CD8-positive, alpha-beta T cell (primary cell): ENCODE measurements at regions of chr7 and their contacts with region 1.

Region 1: DNA sequence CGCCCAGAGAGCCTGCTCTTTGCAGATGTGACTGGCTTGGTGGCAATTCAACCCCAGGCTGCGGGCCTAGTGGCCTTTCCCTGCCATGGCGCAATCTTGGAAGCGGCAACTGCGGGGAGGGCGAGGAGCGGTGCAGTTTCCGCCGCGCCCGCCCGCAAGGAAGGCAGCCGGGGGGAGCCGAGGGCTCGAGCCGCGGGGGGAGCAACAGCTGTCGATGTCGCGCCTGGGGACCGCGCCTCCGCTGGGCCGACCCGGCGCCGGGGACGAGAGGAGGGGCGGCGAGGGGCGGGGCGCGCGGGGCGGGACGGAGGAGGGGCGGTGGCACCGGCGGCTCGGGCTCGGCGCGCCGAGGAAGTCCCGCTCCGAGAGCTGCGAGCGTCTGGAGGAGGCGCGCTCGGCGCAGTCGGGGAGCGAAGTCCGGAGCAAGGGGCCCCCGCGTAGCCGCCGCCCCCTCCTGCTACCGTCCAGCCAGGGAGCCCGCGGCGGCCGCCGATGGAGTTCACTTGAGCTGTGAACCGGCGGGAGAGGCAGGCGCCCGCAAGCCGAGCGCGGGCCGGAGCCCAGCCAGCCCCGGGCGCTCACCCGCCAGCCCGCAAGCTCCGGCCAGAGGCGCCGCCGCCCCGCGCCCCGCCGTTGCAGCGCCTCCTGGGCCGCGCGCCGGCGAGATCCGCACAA is 438.1 kb upstream of the GALNT17 start:
- DNase-seq: peak; percentile 29 to 90 (median 69)
- ATAC-seq: peak; percentile 78
- H3K4me3 ChIP-seq: peak overlapping the region in 1 of 2 experiments; percentile 30
- H3K4me3 Mint-ChIP-seq: peak overlapping the region; percentile 82
- H3K27ac ChIP-seq: peak overlapping the region in 1 of 2 experiments; percentile 53
- H3K27ac Mint-ChIP-seq: peak overlapping the region; percentile 72
- H3K4me1 ChIP-seq: peaks cover 8% of the 10 kb centered on the region
- H3K4me1 Mint-ChIP-seq: peaks cover 33% of the 10 kb centered on the region
- H3K27me3 ChIP-seq: no peaks in the 10 kb centered on the region
- H3K27me3 Mint-ChIP-seq: peaks cover 28% of the 10 kb centered on the region
- CTCF ChIP-seq: no peak

Region 2: DNA sequence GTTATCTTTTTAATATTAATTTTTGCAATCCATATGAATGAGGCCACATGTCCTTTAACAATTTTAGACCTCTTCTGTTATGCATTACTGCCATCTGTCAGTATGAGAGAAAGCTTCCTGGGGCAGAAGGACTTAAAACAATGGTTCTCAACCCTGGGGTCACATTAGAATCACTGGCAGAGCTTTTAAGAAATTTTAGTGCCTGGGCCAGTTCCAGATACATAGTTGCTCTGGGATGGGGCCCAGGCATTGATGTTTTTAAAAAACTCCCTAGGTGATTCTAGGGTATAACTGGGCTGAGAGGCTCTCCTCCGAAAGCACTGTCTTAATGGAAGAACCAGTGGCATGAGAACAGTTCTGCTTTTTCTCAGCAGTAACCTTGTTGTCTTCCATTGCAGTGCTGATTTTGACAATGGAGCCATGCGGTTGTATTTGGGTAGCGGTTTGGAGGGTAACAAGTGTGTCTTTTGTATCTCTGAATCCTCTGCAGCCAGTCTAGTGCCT is 868.7 kb before region 1 on chr7:
- CTCF ChIA-PET with region 1: no interaction called
- POLR2A ChIA-PET with region 1: no interaction called
- intact Hi-C with region 1: loop called in 1 of 2 experiments (anchors 10 kb)
- DNase-seq: peak in 1 of 9 experiments; percentile 17
- ATAC-seq: no peak
- H3K4me3 ChIP-seq: peak overlapping the region in 1 of 2 experiments; percentile 53
- H3K4me3 Mint-ChIP-seq: no peak overlapping the region
- H3K27ac ChIP-seq: peak overlapping the region in 1 of 2 experiments; percentile 65
- H3K27ac Mint-ChIP-seq: no peak overlapping the region
- H3K4me1 ChIP-seq: no peaks in the 10 kb centered on the region
- H3K4me1 Mint-ChIP-seq: peaks cover 14% of the 10 kb centered on the region
- H3K27me3 ChIP-seq: no peaks in the 10 kb centered on the region
- H3K27me3 Mint-ChIP-seq: peaks cover 4% of the 10 kb centered on the region
- CTCF ChIP-seq: no peak

Region 3: DNA sequence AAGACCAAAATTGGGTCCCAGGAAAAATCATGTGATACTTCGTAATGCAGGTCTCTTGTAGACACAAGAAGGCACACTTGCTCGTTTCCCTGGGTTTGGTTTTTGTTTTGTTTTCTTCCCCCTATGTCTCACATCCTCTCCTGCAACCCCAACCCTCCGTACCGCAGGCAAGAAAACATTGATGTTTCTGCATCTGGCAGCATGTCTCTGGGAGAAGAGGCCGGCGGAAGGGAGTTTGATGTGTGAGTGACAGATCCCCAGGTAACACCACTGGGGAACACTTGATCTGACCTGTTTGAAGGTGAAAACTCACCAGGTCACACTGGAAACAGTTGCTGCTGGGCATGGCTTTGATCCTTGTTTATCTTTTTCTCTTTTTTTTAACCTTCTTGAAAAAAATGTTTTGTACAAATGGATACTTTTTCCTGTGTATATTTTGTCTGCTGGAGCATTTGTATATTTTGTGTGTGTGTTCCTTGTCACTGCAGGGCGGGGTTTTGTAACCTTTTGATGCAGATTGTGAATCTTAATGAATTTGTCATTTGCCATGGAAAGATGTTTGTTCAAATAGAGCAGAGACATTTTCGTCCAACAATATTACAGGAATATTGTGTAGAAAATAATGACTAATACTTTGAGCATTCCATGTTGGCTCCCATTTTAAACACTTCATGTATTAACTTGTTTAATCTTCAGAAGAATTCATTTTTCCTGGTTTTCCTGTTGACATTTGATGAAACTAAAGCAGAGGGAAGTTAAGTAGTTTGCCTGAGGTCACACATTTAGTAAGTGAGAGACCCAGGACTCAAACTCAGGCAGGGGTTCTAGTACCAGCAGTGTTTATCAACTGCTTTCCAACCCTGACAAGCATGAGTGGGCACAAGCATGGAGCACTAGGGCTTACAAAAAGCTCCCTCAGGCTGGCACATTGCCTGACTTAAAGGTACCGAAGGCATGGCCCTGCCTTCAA is 376.8 kb before region 1 on chr7:
- CTCF ChIA-PET with region 1: no interaction called
- POLR2A ChIA-PET with region 1: no interaction called
- intact Hi-C with region 1: loop called (anchors 10 kb)
- DNase-seq: peak in 6 of 9 experiments; percentile 17 to 56 (median 31)
- ATAC-seq: peak; percentile 54
- H3K4me3 ChIP-seq: no peak overlapping the region
- H3K4me3 Mint-ChIP-seq: peak overlapping the region; percentile 26
- H3K27ac ChIP-seq: no peak overlapping the region
- H3K27ac Mint-ChIP-seq: no peak overlapping the region
- H3K4me1 ChIP-seq: peaks cover 19% of the 10 kb centered on the region
- H3K4me1 Mint-ChIP-seq: peaks cover 42% of the 10 kb centered on the region
- H3K27me3 ChIP-seq: no peaks in the 10 kb centered on the region
- H3K27me3 Mint-ChIP-seq: no peaks in the 10 kb centered on the region
- CTCF ChIP-seq: no peak

Region 4: GRCh38 chr7:70585071-70585470 is 108.8 kb before region 1 on chr7:
- CTCF ChIA-PET with region 1: interaction called, 16 read pairs
- POLR2A ChIA-PET with region 1: no interaction called
- intact Hi-C with region 1: loop called (anchors 1 to 5 kb)
- DNase-seq: peak in 3 of 9 experiments; percentile 18 to 44 (median 30)
- ATAC-seq: no peak
- H3K4me3 ChIP-seq: no peak overlapping the region
- H3K4me3 Mint-ChIP-seq: no peak overlapping the region
- H3K27ac ChIP-seq: no peak overlapping the region
- H3K27ac Mint-ChIP-seq: no peak overlapping the region
- H3K4me1 ChIP-seq: no peaks in the 10 kb centered on the region
- H3K4me1 Mint-ChIP-seq: peaks cover 5% of the 10 kb centered on the region
- H3K27me3 ChIP-seq: no peaks in the 10 kb centered on the region
- H3K27me3 Mint-ChIP-seq: no peaks in the 10 kb centered on the region
- CTCF ChIP-seq: no peak

Region 5: GRCh38 chr7:70595753-70596597 is 97.8 kb before region 1 on chr7:
- CTCF ChIA-PET with region 1: interaction called, 11 read pairs
- POLR2A ChIA-PET with region 1: no interaction called
- intact Hi-C with region 1: no loop called
- DNase-seq: peak in 3 of 9 experiments; percentile 5 to 49 (median 28)
- ATAC-seq: peak; percentile 61
- H3K4me3 ChIP-seq: peak overlapping the region in 1 of 2 experiments; percentile 26
- H3K4me3 Mint-ChIP-seq: peak overlapping the region; percentile 50
- H3K27ac ChIP-seq: no peak overlapping the region
- H3K27ac Mint-ChIP-seq: no peak overlapping the region
- H3K4me1 ChIP-seq: no peaks in the 10 kb centered on the region
- H3K4me1 Mint-ChIP-seq: peaks cover 5% of the 10 kb centered on the region
- H3K27me3 ChIP-seq: peaks cover 4 to 7% of the 10 kb centered on the region in 2 experiments
- H3K27me3 Mint-ChIP-seq: peaks cover 35% of the 10 kb centered on the region
- CTCF ChIP-seq: no peak

Region 6: GRCh38 chr7:70647801-70648498 is 45.9 kb before region 1 on chr7:
- CTCF ChIA-PET with region 1: interaction called, 4 read pairs
- POLR2A ChIA-PET with region 1: interaction called, 10 read pairs
- intact Hi-C with region 1: loop called (anchors 2 kb)
- DNase-seq: peak; percentile 47 to 96 (median 83)
- ATAC-seq: peak; percentile 87
- H3K4me3 ChIP-seq: peak overlapping the region in 1 of 2 experiments; percentile 10
- H3K4me3 Mint-ChIP-seq: peak overlapping the region; percentile 46
- H3K27ac ChIP-seq: peak overlapping the region; percentile 17 to 62
- H3K27ac Mint-ChIP-seq: peak overlapping the region; percentile 85
- H3K4me1 ChIP-seq: peaks cover 28% of the 10 kb centered on the region
- H3K4me1 Mint-ChIP-seq: peaks cover 34% of the 10 kb centered on the region
- H3K27me3 ChIP-seq: peaks cover 0 to 2% of the 10 kb centered on the region in 2 experiments
- H3K27me3 Mint-ChIP-seq: no peaks in the 10 kb centered on the region
- CTCF ChIP-seq: no peak

Region 7: DNA sequence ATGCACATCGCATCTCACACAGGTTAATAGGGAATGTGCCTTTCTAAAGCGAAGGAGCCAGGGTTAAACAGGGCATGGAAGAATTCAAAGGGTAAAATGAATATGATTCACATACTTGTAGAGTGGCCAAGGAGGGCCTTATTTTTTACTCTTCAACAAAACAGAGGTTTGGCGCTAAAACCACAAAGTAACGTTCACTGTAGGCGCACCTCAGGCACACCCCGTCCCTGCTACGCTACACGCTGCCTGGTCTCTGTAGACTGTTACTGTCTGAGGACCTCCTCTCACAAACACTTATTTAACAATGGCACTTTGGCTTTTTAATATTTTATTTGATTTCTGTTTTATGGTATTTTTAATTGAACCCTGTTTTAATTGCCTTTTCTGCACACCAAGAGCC is 24.0 kb before region 1 on chr7:
- CTCF ChIA-PET with region 1: no interaction called
- POLR2A ChIA-PET with region 1: no interaction called
- intact Hi-C with region 1: no loop called
- DNase-seq: peak in 6 of 9 experiments; percentile 25 to 75 (median 54)
- ATAC-seq: peak; percentile 88
- H3K4me3 ChIP-seq: no peak overlapping the region
- H3K4me3 Mint-ChIP-seq: no peak overlapping the region
- H3K27ac ChIP-seq: no peak overlapping the region
- H3K27ac Mint-ChIP-seq: no peak overlapping the region
- H3K4me1 ChIP-seq: peaks cover 8% of the 10 kb centered on the region
- H3K4me1 Mint-ChIP-seq: peaks cover 8% of the 10 kb centered on the region
- H3K27me3 ChIP-seq: no peaks in the 10 kb centered on the region
- H3K27me3 Mint-ChIP-seq: no peaks in the 10 kb centered on the region
- CTCF ChIP-seq: no peak

Region 8: DNA sequence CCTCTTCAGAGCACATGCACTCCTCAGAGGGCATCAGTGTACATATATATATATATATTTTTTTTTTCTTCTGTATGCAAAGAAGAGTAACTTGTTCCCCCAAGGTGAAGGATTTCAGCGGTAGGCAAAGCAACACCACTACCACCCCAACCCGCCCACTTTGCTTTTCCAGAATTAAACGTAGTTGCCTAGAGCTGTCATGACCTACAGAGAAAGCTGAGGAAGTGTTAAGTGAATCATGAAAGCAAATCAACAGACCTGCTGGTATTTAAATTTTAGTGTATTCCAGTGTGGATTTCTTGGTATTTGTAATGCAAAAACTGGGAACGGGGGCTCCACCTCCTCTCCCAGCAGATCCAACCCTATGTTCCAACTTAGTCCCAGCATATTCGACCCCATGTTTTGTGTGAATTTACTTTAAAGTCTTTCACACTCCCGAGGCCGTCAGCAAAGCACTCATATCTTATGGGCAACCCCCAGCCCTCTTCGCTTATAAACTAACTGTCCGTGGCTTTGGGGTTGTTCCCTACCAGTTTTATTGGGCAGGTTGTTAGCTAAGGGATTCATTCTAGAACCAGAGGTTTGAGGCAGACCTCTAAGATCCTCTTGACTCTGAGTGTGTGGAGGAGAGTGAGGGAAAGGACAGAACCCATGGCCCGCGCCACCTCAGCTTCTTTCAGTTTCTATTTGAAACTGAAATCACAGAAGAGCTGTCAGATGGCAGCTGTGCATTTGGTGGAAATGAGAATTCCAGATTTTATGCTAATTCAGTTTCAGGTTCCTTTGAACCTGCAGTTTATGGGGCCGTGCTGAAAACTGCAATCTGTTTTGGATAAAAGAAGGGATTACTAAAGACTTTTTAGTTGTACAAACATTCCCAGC is 12.1 kb before region 1 on chr7:
- CTCF ChIA-PET with region 1: interaction called, 10 read pairs
- POLR2A ChIA-PET with region 1: interaction called, 3 read pairs
- intact Hi-C with region 1: no loop called
- DNase-seq: peak in 2 of 9 experiments; percentile 47 to 64
- ATAC-seq: peak; percentile 33
- H3K4me3 ChIP-seq: peak overlapping the region; percentile 20 to 44
- H3K4me3 Mint-ChIP-seq: peak overlapping the region; percentile 77
- H3K27ac ChIP-seq: peak overlapping the region in 1 of 2 experiments; percentile 74
- H3K27ac Mint-ChIP-seq: peak overlapping the region; percentile 75
- H3K4me1 ChIP-seq: peaks cover 16% of the 10 kb centered on the region
- H3K4me1 Mint-ChIP-seq: peaks cover 37% of the 10 kb centered on the region
- H3K27me3 ChIP-seq: no peaks in the 10 kb centered on the region
- H3K27me3 Mint-ChIP-seq: no peaks in the 10 kb centered on the region
- CTCF ChIP-seq: no peak

Region 9: GRCh38 chr7:71220210-71220695 is 526.4 kb after region 1 on chr7:
- CTCF ChIA-PET with region 1: no interaction called
- POLR2A ChIA-PET with region 1: no interaction called
- intact Hi-C with region 1: no loop called
- DNase-seq: no peak
- ATAC-seq: no peak
- H3K4me3 ChIP-seq: no peak overlapping the region
- H3K4me3 Mint-ChIP-seq: no peak overlapping the region
- H3K27ac ChIP-seq: no peak overlapping the region
- H3K27ac Mint-ChIP-seq: no peak overlapping the region
- H3K4me1 ChIP-seq: no peaks in the 10 kb centered on the region
- H3K4me1 Mint-ChIP-seq: no peaks in the 10 kb centered on the region
- H3K27me3 ChIP-seq: no peaks in the 10 kb centered on the region
- H3K27me3 Mint-ChIP-seq: no peaks in the 10 kb centered on the region
- CTCF ChIP-seq: no peak